ENCODE measurements at regions of chr11 and their contacts with region 1.

Region 1: GRCh38 chr11:2196970-2197770 is 25.6 kb upstream of the TH start:
- DNase-seq: peak; percentile 83
- H3K4me3 Mint-ChIP-seq: no peak overlapping the region
- H3K27ac Mint-ChIP-seq: no peak overlapping the region
- H3K4me1 Mint-ChIP-seq: peaks cover 2% of the 10 kb centered on the region
- H3K27me3 Mint-ChIP-seq: no peaks in the 10 kb centered on the region

Region 2: DNA sequence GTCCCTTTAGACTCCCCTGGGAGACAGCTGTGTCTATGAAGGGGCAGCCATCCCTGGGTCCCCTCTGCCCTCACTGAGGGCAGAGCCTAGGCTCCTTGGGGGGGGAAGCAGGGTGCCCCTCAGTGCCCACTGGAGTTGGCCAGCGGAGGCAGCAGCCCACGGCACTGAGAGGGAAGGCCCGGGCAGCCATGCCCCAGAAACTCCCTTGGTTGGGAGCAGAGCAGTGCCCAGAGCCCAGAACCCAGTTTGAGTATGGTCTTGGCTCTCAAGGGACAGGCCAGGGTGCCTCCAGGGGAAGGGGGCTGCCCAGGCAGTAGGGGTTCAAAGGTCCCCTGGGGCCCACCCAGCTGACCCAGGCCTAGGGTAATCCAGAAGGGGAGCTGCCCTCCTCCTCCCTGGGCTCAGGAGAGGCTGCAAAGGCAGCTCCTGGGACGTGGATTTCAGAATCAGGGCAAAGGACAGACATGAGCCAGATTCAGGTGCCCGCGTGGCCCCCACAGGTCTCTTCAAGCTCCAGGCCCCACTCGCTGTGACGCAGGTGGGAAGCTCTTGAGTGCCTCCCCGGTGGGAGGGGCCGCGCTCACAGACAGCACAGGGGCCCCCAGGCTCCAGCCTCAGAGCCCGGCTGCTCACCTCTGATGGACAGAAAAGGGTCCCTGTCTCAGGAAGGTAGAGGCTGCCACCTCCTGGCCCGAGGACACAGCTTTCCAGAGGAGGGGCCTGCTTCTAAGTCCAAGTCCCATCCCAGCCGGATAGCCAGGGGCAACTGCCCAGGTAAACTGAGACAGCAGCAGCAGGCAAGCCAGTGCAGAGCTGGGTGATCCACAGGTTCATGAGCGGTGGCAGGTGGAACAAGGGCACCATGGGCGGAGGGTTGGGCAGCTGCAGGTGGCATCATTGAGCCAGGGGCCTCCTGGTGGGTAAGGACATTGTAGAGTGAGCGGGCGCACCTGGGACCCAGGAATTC is 101.9 kb after region 1 on chr11:
- CTCF ChIA-PET with region 1: interaction called, 54 read pairs
- POLR2A ChIA-PET with region 1: no interaction called
- intact Hi-C with region 1: loop called (anchors 1 kb)
- DNase-seq: peak; percentile 43
- H3K4me3 Mint-ChIP-seq: no peak overlapping the region
- H3K27ac Mint-ChIP-seq: no peak overlapping the region
- H3K4me1 Mint-ChIP-seq: peaks cover 26% of the 10 kb centered on the region
- H3K27me3 Mint-ChIP-seq: no peaks in the 10 kb centered on the region

Region 3: GRCh38 chr11:2305140-2305840 is 108.1 kb after region 1 on chr11:
- CTCF ChIA-PET with region 1: interaction called, 54 read pairs
- POLR2A ChIA-PET with region 1: no interaction called
- intact Hi-C with region 1: loop called (anchors 2 kb)
- DNase-seq: peak; percentile 88
- H3K4me3 Mint-ChIP-seq: no peak overlapping the region
- H3K27ac Mint-ChIP-seq: no peak overlapping the region
- H3K4me1 Mint-ChIP-seq: peaks cover 42% of the 10 kb centered on the region
- H3K27me3 Mint-ChIP-seq: no peaks in the 10 kb centered on the region

Region 4: GRCh38 chr11:2526808-2527381 is 329.7 kb after region 1 on chr11:
- CTCF ChIA-PET with region 1: interaction called, 3 read pairs
- POLR2A ChIA-PET with region 1: no interaction called
- intact Hi-C with region 1: loop called (anchors 10 kb)
- DNase-seq: no peak
- H3K4me3 Mint-ChIP-seq: no peak overlapping the region
- H3K27ac Mint-ChIP-seq: no peak overlapping the region
- H3K4me1 Mint-ChIP-seq: peaks cover 19% of the 10 kb centered on the region
- H3K27me3 Mint-ChIP-seq: no peaks in the 10 kb centered on the region